Stomach (tissue), 19 donors: ENCODE measurements at regions of chr17 and their contacts with region 1.

Region 1: DNA sequence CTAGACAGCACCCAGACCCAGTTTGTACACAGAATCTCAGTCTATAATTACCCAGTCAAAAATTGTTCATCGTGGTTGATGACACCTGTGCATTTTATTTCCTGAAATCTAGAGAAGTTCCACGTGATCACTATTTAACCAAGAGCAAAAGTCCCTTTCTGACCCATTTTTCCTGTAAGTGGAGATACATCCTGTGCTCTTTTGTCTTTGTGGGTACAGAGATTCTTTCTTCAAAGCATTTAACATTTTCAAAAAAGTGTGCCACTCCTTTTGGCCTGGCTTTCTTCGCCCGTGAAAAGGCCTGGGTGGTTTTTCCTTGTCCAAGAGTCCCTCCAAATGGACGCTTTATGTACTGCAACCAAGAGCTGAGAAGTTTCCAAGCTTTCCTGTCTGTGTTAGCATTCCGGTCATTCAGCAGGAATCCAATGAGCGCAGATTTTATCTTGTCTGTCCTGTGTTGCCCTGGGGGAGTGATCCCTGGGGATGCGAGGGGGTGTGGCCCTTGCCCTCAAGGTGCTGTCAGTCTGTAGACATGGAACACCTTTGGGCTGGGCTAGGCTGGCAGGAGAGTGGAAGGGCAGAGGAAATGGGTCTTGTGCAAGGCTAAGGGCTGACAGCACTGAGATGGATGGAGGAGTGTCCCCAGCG is 161.1 kb upstream of the CACNG5 start:
- DNase-seq: peak; percentile 59 to 83
- H3K4me3 ChIP-seq: no peak overlapping the region
- H3K27ac ChIP-seq: peak overlapping the region in 1 of 5 donors; percentile 68
- H3K4me1 ChIP-seq: peaks cover 12 to 41% (median 23%) of the 10 kb centered on the region in 4 donors
- H3K27me3 ChIP-seq: no peaks in the 10 kb centered on the region
- CTCF ChIP-seq: peak in 5 of 7 experiments; percentile 61 to 80 (median 69)
- EP300 ChIP-seq: no peak
- POLR2A ChIP-seq: no peak

Region 2: DNA sequence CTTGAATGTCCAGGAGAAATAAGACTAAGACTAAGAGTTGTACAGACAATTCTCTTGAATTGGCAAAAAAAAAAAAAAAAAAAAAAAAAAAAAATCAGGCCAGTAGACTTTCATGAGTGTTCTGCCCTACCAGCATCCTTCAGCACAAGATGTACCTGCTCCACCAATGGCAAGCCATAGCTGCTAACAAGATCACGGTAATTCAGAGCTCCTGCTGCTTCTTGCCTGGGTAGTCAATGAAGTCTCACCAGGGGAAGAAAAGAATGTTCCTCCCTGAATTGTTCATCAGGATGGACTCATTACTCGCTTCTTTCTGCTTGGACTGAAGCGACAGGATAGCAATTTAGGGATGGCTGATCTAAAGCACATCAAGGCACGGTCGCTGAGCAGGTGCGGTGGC is 413.5 kb before region 1 on chr17:
- intact Hi-C with region 1: loop called (anchors 5 kb)
- DNase-seq: no peak
- H3K4me3 ChIP-seq: no peak overlapping the region
- H3K27ac ChIP-seq: no peak overlapping the region
- H3K4me1 ChIP-seq: peaks cover 0 to 4% (median 1%) of the 10 kb centered on the region in 4 donors
- H3K27me3 ChIP-seq: no peaks in the 10 kb centered on the region
- CTCF ChIP-seq: no peak
- EP300 ChIP-seq: no peak
- POLR2A ChIP-seq: no peak

Region 3: GRCh38 chr17:66580184-66580955 is 93.4 kb before region 1 on chr17:
- intact Hi-C with region 1: no loop called
- DNase-seq: peak; percentile 38 to 79
- H3K4me3 ChIP-seq: no peak overlapping the region
- H3K27ac ChIP-seq: peak overlapping the region in 4 of 5 donors; percentile 42 to 77 (median 72)
- H3K4me1 ChIP-seq: peaks cover 0 to 60% (median 31%) of the 10 kb centered on the region in 4 donors
- H3K27me3 ChIP-seq: no peaks in the 10 kb centered on the region
- CTCF ChIP-seq: no peak
- EP300 ChIP-seq: no peak
- POLR2A ChIP-seq: no peak

Region 4: DNA sequence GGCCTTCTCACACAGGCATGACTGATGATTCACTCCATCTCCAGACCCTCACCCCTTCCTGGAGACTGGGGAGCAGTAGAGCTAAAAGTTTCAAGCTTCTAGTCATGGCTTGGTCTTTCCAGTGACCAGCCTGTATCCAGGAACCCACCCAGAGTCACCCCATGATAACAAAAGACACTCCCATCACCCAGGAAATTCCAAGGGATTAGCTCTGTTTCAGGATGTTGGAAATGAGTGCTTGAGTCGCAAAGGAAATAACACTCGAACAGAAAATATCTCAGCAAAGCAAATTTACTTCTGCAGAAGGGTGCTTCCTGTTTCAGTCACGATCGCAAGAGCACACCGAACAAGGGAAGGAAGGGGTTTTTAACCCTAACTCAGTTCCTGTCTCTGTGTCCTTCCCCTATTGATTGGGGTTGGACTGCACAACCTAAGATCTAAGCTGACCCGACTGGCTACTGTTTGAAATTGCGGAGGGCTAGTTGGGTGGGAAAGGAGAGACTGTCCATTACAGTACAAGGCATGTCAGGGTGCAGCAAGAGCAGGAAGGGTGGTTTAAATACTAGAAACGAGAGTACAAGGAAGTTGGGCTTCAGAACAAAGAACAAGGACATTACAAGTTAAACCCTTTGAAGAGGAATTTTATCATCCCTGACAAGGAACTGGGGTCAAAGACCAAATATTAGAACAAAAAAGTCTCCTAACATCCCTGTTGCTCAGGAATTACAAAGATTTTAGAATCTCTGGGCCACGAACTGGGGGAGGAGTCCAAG is 63.2 kb before region 1 on chr17:
- intact Hi-C with region 1: no loop called
- DNase-seq: no peak
- H3K4me3 ChIP-seq: no peak overlapping the region
- H3K27ac ChIP-seq: no peak overlapping the region
- H3K4me1 ChIP-seq: peaks cover 0 to 12% (median 4%) of the 10 kb centered on the region in 4 donors
- H3K27me3 ChIP-seq: no peaks in the 10 kb centered on the region
- CTCF ChIP-seq: no peak
- EP300 ChIP-seq: no peak
- POLR2A ChIP-seq: no peak

Region 5: GRCh38 chr17:66633317-66633965 is 40.4 kb before region 1 on chr17:
- intact Hi-C with region 1: no loop called
- DNase-seq: peak in 1 of 2 donors; percentile 38
- H3K4me3 ChIP-seq: no peak overlapping the region
- H3K27ac ChIP-seq: no peak overlapping the region
- H3K4me1 ChIP-seq: peaks cover 0 to 38% (median 0%) of the 10 kb centered on the region in 4 donors
- H3K27me3 ChIP-seq: no peaks in the 10 kb centered on the region
- CTCF ChIP-seq: no peak
- EP300 ChIP-seq: no peak
- POLR2A ChIP-seq: no peak

Region 6: DNA sequence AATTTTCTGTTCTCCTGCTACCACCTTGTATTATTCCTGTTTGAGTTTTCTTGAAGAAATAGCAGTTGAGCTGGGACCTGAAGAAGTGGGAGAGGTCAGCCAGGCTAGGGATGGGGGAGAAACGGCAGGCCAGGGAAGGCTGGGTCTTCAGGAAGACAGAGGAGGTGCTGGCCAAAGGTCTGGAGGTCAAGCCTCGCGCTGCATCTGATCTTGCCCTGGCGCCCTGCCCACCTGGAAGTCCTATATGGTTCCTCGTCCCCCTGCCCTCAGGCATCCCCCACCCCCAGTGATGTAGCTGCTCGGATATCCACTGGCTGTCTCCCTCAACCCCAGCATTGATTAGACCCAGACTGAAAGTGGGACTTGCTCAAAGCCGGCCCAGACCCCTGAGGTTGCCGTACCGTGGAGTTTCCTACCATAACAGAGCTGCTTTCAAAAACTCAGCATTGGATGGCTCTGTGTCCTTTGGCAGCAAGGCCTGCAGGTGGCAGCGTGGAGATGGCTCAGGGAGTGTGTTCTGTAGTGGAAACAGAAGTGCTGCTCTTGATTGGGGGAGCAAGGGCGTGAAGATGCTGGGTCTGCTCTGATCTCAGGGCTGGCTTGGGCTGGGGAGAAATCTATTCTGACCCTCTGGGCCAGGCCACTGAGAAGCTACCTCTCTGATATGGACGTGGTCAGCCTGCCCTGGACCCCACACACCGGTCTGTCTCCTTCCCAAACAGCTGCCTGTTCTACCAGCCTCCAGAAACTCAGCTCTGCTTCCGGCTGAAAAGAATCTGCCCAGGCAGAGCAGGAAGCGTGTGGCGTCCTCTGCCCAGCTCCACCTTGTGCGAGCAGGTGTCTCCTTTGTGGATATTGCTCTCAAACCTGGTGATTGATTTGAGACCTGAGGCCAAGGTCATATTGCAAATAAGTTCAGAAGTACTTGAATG is 54.1 kb after region 1 on chr17:
- intact Hi-C with region 1: no loop called
- DNase-seq: peak; percentile 52 to 88
- H3K4me3 ChIP-seq: no peak overlapping the region
- H3K27ac ChIP-seq: no peak overlapping the region
- H3K4me1 ChIP-seq: peaks cover 22 to 49% (median 32%) of the 10 kb centered on the region in 4 donors
- H3K27me3 ChIP-seq: no peaks in the 10 kb centered on the region
- CTCF ChIP-seq: peak in 4 of 7 experiments; percentile 15 to 50 (median 35)
- EP300 ChIP-seq: no peak
- POLR2A ChIP-seq: no peak